ENCODE measurements at regions of chr19 and their contacts with region 1.

Region 1: GRCh38 chr19:43754503-43755255 is at the start of gene SMG9:
- DNase-seq: peak; percentile 98

Region 2: DNA sequence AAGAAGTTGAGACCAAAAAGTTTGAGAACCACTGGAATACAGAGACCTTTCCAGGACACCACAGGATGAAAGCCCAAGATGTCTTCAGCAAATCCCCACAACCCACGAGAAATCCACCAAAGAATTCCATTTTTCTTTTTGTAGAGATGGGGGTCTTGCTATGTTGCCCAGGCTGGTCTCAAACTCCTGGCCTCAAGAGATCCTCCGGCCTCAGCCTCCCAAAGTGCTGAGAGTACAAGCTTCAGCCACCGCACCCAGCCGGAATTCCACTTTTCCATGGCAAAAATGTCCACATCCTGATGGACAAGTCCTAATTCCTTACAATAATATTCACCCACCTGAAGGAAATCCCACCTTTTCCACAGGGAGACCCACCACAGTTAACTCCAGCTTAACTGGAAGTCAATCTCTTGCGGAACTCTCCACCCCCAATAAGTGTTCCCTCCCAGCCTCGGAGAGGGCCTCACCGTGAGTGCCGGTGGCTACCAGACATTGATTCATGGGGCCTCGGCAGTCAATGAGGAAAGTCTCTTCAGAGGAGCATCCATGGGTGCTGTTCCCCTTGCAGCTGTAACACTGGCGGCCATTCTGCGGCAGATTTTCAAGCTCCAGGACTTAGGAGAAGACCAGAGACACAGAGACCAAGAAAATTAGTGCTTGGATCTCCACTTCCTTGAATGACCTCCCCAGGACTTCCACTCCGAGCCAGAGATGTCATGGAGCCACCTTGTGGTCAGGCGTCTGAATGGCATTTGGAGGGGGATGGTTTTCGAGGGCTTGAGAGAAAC is 102.7 kb before region 1 on chr19:
- CTCF ChIA-PET with region 1: no interaction called
- POLR2A ChIA-PET with region 1: no interaction called
- DNase-seq: peak; percentile 76

Region 3: DNA sequence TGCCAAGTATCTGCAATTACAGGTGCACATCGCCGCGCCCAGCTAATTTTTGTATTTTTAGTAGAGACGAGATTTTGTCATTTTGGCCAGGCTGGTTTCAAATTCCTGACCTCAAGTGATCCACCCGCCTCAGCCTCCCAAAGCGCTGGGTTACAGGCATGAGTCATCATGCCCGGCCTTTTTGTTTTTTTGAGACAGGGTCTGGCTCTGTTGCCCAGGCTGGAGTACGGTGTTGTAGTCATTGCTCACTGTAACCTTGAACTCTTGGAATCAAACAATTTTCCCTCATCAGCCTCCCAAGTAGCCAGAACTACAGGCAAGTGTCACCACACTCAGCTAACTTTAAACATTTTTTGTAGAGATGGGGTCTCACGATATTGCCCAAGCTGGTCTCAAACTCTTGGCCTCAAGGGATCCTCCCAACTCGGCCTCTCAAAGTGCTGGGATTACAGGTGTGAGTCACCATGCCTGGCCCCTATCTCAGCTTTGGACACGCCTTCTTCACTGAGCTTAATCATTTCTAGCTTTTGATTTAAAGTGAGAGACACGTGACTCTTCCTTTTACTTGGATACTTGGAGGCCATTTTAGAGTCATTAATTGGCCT is 42.8 kb before region 1 on chr19:
- CTCF ChIA-PET with region 1: no interaction called
- POLR2A ChIA-PET with region 1: no interaction called
- DNase-seq: no peak

Region 4: GRCh38 chr19:43731846-43732245 is 22.8 kb before region 1 on chr19:
- CTCF ChIA-PET with region 1: no interaction called
- POLR2A ChIA-PET with region 1: no interaction called
- DNase-seq: no peak

Region 5: GRCh38 chr19:43743022-43743421 is 11.7 kb before region 1 on chr19:
- CTCF ChIA-PET with region 1: no interaction called
- POLR2A ChIA-PET with region 1: interaction called, 13 read pairs
- DNase-seq: no peak

Region 6: DNA sequence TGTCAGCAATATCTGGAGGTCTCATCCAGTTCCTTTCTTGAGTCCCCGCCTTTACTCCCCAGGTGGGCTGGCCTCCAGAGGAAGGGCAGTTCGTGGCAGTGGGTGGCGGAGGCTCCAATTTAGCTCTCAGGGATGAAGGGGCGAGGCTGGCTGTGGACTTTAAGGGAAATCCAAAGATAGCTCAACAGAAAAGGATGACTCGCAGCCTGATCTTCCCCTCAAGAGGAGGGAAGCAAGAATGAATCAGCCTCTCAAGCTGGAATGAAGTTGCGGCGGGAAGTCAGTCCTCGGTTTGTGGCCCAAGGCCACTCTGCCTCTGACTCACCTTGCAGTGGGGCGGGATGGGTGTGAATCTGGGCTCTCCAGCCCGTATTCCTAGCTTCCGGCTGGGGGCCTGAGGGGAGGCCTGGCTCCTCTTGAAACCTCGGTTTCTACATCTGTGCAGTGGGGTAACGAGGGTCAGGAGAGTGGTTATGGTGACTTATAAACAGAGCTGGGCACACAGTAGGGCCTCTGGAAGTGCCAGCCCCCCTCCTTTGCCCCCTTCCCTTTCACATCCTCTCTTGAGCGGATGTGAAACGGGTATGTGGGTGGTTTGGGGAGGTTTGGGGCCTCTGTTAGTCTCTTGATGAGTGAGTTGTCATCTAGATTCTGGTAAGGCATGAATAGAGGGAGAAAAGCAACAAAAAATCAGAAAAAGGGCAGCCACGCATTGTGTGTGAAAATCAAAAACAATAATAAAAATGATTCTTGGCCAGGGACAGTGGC is 10.6 kb after region 1 on chr19:
- CTCF ChIA-PET with region 1: interaction called, 4 read pairs
- POLR2A ChIA-PET with region 1: interaction called, 45 read pairs
- DNase-seq: no peak

Region 7: DNA sequence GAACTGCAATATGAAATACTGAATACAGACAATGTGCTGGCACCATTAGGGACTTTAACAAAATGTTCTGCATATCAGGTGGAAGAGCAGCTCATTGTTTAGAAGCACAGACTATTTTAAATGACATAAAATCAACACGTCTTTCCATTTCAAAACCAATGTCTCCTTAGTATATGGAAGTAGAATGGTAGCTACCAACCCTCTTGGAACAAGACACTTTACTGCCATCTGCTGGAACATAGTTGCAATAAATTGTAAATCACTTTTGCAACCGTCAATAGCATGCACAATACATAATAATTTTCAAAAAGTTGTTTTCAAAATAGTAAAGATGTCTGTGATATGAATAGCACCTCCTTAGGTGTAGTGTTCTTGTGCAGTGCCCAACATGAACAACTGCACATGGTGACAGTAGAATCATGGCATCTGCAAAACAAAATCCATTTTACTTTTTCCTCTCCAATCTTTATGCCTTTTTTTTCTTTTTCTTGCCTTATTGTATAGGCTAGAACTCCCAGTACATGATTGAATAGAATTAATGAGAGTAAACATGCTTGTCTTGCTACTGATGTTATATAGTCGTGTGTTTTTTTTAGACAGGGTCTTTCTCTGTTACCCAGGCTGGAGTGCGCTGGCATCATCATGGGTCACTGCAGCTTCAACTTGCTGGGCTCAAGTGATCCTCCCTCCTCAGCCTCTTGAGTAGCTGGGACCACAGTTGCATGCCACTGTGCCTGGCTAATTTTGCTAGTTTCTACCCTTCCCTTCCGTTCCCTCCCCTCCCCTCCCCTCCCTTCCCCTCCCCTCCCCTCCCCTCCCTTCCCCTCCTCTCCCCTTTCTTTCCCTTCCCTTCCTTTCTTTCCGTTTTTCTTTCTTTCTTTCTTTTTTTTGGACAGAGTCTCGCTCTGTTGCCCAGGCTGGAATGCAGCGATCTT is 55.4 kb after region 1 on chr19:
- CTCF ChIA-PET with region 1: no interaction called
- POLR2A ChIA-PET with region 1: no interaction called
- DNase-seq: peak; percentile 28

Measured in HEK293T (cell line).